Naive thymus-derived CD4-positive, alpha-beta T cell (primary cell): ENCODE measurements at regions of chrX and their contacts with region 1.

Region 1: GRCh38 chrX:11770320-11770719 is 12.3 kb downstream of the MSL3 start:
- DNase-seq: peak in 7 of 9 donors; percentile 56 to 75 (median 69)
- ATAC-seq: peak; percentile 84
- H3K4me3 ChIP-seq: no peak overlapping the region
- H3K4me3 Mint-ChIP-seq: peak overlapping the region in 2 of 10 donors; percentile 14 to 25
- H3K27ac ChIP-seq: peak overlapping the region; percentile 62
- H3K27ac Mint-ChIP-seq: peak overlapping the region; percentile 69 to 96 (median 86)
- H3K4me1 ChIP-seq: peaks cover 8 to 20% of the 10 kb centered on the region in 2 donors
- H3K4me1 Mint-ChIP-seq: peaks cover 7 to 53% (median 39%) of the 10 kb centered on the region in 7 donors
- H3K27me3 ChIP-seq: no peaks in the 10 kb centered on the region
- H3K27me3 Mint-ChIP-seq: no peaks in the 10 kb centered on the region

Region 2: GRCh38 chrX:10014462-10015356 is 1755.6 kb before region 1 on chrX:
- CTCF ChIA-PET with region 1: no interaction called
- POLR2A ChIA-PET with region 1: no interaction called
- intact Hi-C with region 1: loop called in 1 of 2 experiments (anchors 5 kb)
- DNase-seq: peak; percentile 62 to 84 (median 78)
- ATAC-seq: peak; percentile 97
- H3K4me3 ChIP-seq: peak overlapping the region; percentile 37
- H3K4me3 Mint-ChIP-seq: peak overlapping the region; percentile 50 to 89 (median 64)
- H3K27ac ChIP-seq: peak overlapping the region; percentile 64
- H3K27ac Mint-ChIP-seq: peak overlapping the region in 4 of 9 donors; percentile 45 to 75 (median 58)
- H3K4me1 ChIP-seq: peaks cover 7 to 13% of the 10 kb centered on the region in 2 donors
- H3K4me1 Mint-ChIP-seq: peaks cover 17 to 51% (median 43%) of the 10 kb centered on the region in 7 donors
- H3K27me3 ChIP-seq: no peaks in the 10 kb centered on the region
- H3K27me3 Mint-ChIP-seq: peaks cover 0 to 4% (median 0%) of the 10 kb centered on the region in 5 donors

Region 3: DNA sequence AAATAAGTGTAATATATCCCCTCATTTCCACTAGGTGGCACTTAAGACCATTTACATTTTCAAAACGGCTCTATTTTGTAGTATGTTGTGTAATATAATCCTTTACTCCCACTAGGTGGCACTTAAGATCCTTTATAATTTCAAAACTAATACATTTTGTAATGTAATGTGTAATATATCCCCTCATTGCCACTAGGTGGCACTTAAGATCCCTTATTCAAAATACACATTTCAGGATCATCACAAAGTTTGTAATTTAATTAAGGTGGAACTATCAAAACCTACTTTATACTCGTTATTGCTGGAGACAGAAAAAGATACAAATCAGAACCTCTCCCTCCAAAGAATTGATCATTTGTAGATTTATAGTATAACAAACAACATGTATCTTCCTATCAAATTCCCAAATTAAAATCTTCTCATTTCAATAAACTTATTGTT is 237.1 kb before region 1 on chrX:
- CTCF ChIA-PET with region 1: interaction called, 7 read pairs
- POLR2A ChIA-PET with region 1: interaction called, 3 read pairs
- intact Hi-C with region 1: loop called (anchors 1 kb)
- DNase-seq: peak in 7 of 9 donors; percentile 35 to 82 (median 68)
- ATAC-seq: peak; percentile 99
- H3K4me3 ChIP-seq: no peak overlapping the region
- H3K4me3 Mint-ChIP-seq: no peak overlapping the region
- H3K27ac ChIP-seq: no peak overlapping the region
- H3K27ac Mint-ChIP-seq: no peak overlapping the region
- H3K4me1 ChIP-seq: no peaks in the 10 kb centered on the region
- H3K4me1 Mint-ChIP-seq: no peaks in the 10 kb centered on the region
- H3K27me3 ChIP-seq: no peaks in the 10 kb centered on the region
- H3K27me3 Mint-ChIP-seq: peaks cover 0 to 2% (median 0%) of the 10 kb centered on the region in 5 donors

Region 4: DNA sequence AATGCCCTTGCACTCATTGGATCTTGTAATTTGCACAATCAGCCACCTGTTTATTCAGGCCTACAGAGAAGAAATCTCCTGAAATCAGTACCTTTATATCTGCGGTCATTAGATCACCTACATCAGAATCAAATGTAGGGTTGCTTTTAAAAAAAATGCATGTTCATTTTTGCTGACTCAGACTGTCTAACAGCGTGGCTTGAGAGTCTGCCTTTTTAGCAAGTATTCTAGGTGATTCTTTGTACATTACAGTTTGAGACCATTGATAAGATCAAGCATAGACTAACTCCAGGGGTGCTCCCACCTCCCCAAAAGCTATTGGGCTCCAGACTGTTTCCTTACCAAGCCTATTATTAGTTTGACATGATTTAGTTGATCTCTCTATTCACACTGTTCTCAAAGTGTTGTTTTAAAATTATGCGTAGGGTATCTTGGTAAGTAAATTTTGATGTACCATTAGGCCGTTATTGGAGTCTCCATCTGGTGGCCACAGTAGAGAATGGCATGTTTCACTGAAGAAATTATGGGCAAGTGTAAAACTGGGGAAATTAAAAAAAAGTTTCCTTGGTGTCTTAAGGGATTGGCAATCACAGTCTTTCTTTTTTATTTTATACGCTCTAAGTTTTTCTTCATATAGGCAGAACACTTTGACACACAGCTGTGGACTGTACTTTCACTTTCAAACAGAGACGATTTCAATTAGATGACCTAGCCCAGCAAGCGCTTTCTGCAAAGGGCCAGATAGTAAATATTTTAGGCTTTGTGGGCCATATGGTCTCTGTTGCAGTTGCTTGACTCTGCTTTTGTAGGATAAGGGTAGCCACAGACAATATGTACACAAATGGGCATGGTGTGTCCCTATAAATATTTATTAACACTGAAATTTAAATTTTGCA is 46.0 kb before region 1 on chrX:
- CTCF ChIA-PET with region 1: interaction called, 3 read pairs
- POLR2A ChIA-PET with region 1: no interaction called
- intact Hi-C with region 1: loop called (anchors 1 kb)
- DNase-seq: peak in 6 of 9 donors; percentile 2 to 41 (median 34)
- ATAC-seq: peak; percentile 51
- H3K4me3 ChIP-seq: no peak overlapping the region
- H3K4me3 Mint-ChIP-seq: peak overlapping the region in 1 of 10 donors; percentile 27
- H3K27ac ChIP-seq: no peak overlapping the region
- H3K27ac Mint-ChIP-seq: peak overlapping the region in 1 of 9 donors; percentile 24
- H3K4me1 ChIP-seq: no peaks in the 10 kb centered on the region
- H3K4me1 Mint-ChIP-seq: peaks cover 0 to 5% (median 0%) of the 10 kb centered on the region in 7 donors
- H3K27me3 ChIP-seq: no peaks in the 10 kb centered on the region
- H3K27me3 Mint-ChIP-seq: no peaks in the 10 kb centered on the region

Region 5: GRCh38 chrX:12771445-12772069 is 1001.2 kb after region 1 on chrX:
- CTCF ChIA-PET with region 1: no interaction called
- POLR2A ChIA-PET with region 1: no interaction called
- intact Hi-C with region 1: loop called (anchors 2 to 5 kb)
- DNase-seq: peak; percentile 46 to 72 (median 63)
- ATAC-seq: peak; percentile 100
- H3K4me3 ChIP-seq: no peak overlapping the region
- H3K4me3 Mint-ChIP-seq: peak overlapping the region in 6 of 10 donors; percentile 14 to 50 (median 36)
- H3K27ac ChIP-seq: no peak overlapping the region
- H3K27ac Mint-ChIP-seq: no peak overlapping the region
- H3K4me1 ChIP-seq: no peaks in the 10 kb centered on the region
- H3K4me1 Mint-ChIP-seq: peaks cover 0 to 13% (median 8%) of the 10 kb centered on the region in 7 donors
- H3K27me3 ChIP-seq: no peaks in the 10 kb centered on the region
- H3K27me3 Mint-ChIP-seq: peaks cover 0 to 32% (median 4%) of the 10 kb centered on the region in 5 donors